Dorsolateral prefrontal cortex (tissue), 120 donors: ENCODE measurements at regions of chr2 and their contacts with region 1.

Region 1: GRCh38 chr2:227862227-227862740 is 9.1 kb upstream of the DAW1 start:
- DNase-seq: no peak
- H3K4me3 ChIP-seq: no peak overlapping the region
- H3K27ac ChIP-seq: peak overlapping the region in 1 of 59 donors; percentile 67
- H3K27me3 ChIP-seq: no peaks in the 10 kb centered on the region
- CTCF ChIP-seq: peak; percentile 47 to 91 (median 74)

Region 2: GRCh38 chr2:227132986-227133385 is 729.3 kb before region 1 on chr2:
- intact Hi-C with region 1: loop called in 1 of 2 experiments (anchors 10 kb)
- DNase-seq: no peak
- H3K4me3 ChIP-seq: no peak overlapping the region
- H3K27ac ChIP-seq: no peak overlapping the region
- H3K27me3 ChIP-seq: peaks cover 0 to 13% (median 0%) of the 10 kb centered on the region in 45 donors
- CTCF ChIP-seq: no peak

Region 3: DNA sequence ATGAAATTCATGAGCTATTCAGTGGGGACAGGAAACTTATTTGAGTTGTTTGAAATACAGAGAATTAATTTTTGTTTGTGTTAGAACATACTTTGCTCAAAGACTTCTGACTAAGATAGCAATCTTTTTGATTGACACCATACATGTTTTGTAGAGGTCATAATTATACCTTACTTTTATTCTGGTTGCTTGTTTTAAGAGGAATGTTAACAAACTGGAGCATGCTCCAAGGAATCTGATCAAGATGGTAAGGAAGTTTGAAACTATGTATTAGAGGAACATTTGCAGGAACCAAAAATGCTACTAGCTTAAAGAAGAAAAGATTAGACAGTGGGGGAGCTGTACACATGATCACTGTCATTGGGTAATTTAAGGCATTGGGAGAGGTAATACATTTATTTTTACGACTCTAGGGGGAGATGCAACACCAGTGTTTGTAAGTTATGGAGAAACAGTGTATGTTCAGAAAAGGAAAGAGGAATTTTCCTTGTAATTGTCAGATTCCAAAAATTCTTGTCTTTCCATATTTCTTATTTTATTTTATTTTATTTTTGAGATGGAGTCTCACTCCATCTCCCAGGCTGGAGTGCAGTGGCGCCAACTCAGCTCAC is 382.3 kb before region 1 on chr2:
- intact Hi-C with region 1: loop called in 1 of 2 experiments (anchors 10 kb)
- DNase-seq: no peak
- H3K4me3 ChIP-seq: no peak overlapping the region
- H3K27ac ChIP-seq: peak overlapping the region in 4 of 59 donors; percentile 21 to 49 (median 34)
- H3K27me3 ChIP-seq: no peaks in the 10 kb centered on the region
- CTCF ChIP-seq: peak; percentile 23 to 74 (median 54)

Region 4: DNA sequence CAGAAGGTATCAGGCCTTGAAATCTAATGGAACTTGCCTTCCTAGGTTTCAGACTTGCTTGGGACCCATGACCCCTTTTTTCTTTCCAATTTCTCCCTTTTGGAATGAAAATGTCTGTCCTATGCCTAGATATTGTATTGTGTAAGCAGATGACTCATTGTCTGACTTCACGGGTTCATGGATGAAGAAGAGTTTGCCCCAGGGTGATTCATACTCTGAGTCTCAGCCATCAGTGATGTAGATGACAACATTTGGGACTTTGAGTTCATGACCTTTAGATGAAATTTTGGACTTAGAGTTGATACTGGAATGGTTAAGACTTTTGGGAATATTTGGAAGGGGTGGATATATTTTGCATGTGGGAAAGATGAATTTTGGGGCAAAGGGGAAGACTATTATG is 206.8 kb before region 1 on chr2:
- intact Hi-C with region 1: loop called in 1 of 2 experiments (anchors 10 kb)
- DNase-seq: no peak
- H3K4me3 ChIP-seq: no peak overlapping the region
- H3K27ac ChIP-seq: no peak overlapping the region
- H3K27me3 ChIP-seq: no peaks in the 10 kb centered on the region
- CTCF ChIP-seq: no peak

Region 5: DNA sequence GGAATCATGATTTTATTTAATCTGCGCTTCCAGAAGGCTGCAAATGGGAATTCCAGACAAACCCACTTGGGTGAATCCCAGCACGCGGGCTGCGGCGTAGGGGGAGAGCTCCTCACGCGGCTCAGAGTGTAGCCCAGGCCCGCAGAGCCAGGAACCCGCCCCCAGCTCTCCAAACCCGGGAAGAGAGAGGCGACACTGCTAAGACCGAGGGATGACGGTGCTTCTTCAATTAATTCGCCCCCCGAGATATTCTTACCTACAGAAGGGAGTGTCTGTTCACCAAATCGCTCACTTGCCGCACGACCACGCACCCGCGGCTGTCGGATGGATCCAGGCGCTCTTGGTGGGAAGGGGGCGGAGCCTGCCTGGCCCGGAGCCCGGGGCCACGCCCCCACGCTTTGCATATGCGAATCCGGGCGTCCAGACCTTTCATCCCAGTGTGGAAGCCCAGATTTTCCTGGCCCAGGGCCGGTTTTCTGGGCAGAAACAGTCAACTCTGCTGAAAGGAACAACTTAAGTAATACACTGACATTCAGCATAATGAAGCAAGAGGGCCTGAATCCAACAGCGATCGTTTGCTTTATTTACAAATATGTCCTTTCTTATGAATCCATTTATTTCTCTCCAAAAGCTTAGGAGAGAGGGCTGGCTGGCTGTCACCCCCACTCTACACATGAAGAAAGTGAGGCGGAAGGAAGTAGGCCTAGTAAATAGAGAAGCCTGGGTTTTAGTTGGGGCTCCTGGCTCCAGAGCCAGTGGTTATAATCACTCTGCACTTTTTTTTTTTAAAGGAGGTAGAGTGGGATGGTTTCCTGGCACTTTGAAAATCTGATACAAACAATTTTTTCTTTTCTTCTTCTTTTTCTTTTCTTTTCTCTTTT is 144.4 kb before region 1 on chr2 and contains the start of gene SLC19A3:
- intact Hi-C with region 1: loop called in 1 of 2 experiments (anchors 5 kb)
- DNase-seq: peak; percentile 28 to 82 (median 76)
- H3K4me3 ChIP-seq: peak within 1 kb of the TSS; percentile 31 to 76 (median 57)
- H3K27ac ChIP-seq: peak within 1 kb of the TSS in 52 of 59 donors; percentile 13 to 88 (median 64)
- H3K27me3 ChIP-seq: no peaks in the 10 kb centered on the region
- CTCF ChIP-seq: peak in 2 of 56 donors; percentile 2 to 10
- total RNA-seq, gene SLC19A3: 2.8 to 14.0 (median 6.4) TPM